ENCODE measurements at regions of chr14 and their contacts with region 1.

Region 1: DNA sequence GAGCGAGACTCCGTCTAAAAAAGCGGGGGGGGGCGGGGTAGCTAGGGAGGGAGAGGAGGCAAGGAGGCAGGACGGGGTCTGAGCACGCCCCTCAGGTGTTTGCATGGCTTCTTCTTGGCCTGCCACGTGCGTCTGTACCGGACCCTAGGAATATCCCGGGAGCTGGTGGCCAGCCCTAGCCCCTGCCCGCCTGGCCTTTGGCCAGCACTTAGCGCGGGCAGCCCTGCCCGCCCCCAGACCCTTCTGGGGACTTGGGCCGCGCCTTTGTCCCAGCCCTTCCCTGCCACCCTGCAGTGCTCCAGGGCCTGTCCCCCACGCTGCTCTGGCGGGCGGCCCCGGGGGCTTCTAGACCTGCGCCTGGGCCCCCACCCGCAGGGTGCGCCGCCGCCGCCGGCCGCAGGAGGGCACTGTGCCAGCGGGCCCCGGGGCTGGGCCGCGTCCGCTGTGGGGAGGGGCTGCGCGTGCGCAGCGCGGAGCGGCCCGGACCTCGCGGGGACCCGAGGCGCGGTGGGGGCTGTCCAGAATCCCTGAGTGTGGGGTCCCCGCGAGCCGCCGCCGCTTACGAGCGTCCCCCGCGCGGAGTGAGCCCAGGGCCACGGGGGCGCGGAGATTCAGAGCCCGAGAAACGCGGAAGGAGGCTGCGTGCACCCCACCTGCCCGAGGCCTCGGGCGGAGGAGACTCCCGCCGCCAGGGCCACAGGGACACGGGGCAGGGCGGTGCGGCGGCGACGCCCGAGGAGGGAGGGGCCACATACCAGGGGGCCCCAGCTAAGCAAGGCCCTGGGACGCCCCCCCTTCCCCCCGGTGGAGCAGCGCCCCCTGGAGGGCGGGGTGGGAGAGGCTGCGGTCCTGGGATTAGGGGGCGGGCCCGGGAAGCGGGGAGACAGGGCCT is 21.0 kb downstream of the SLC25A29 start:
- DNase-seq: peak; percentile 81
- ATAC-seq: peak; percentile 80 to 85
- H3K4me3 ChIP-seq: peak overlapping the region; percentile 67
- H3K27ac ChIP-seq: peak overlapping the region; percentile 96 to 100
- H3K4me1 ChIP-seq: peaks cover 9% of the 10 kb centered on the region; the same call in 2 of the 3 replicates
- CTCF ChIP-seq: peak; percentile 76
- EP300 ChIP-seq: no peak
- POLR2A ChIP-seq: peak; percentile 68
- RAD21 ChIP-seq: peak; percentile 10 to 41; a peak in 2 of 5 replicates

Region 2: DNA sequence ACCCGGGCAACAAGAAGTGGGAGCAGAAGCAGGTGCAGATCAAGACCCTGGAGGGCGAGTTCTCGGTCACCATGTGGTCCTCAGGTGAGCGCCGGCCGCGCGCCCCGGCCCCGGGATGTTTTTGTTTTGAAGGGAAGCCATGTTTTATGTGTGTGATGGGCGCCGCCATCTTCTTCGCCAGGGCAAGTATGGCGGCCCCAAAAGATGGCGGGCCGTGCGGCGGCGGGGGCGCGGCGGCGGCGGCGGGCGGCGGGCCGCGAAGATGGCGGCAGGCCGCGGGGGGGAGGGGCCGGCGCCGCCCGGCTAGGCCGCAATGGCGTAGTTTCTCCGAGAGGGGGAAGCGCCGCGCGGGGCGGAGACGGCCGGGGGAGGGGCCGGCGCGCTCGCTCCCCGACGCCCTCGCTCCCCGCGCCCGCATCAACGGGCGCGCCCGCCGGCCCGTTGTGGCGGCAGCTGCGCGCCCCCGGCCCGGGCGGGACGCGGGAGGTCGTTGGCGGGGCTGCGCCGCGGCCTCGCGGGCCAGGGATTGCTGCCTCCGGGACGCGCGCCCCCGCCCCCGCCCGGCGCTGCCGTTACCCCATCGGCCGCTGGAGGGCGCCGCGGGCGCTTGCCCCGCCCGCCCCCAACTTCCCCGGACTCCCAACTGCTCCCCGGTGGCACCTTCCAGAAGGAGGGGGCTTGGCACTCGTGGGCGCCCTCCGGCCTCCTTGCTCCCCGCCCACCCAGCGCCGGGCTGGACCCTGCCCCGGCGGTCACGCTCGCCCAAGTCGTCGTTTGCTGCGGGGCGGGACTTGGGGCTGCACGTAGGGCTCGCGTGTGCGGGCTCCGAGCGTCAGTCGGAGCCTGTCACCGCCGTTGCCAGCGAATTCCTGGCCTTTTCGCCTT is 45.2 kb before region 1 on chr14:
- CTCF ChIA-PET with region 1: interaction called, 17 read pairs
- POLR2A ChIA-PET with region 1: no interaction called
- DNase-seq: peak; percentile 62 to 91
- ATAC-seq: peak; percentile 63 to 81
- H3K4me3 ChIP-seq: peak overlapping the region; percentile 66
- H3K27ac ChIP-seq: peak overlapping the region; percentile 96 to 98
- H3K4me1 ChIP-seq: peaks cover 42% of the 10 kb centered on the region
- CTCF ChIP-seq: peak; percentile 96
- EP300 ChIP-seq: no peak
- POLR2A ChIP-seq: peak; percentile 26; the same call in 1 of the 2 replicates
- RAD21 ChIP-seq: peak in 1 of 2 experiments; percentile 28; a peak in 2 of 5 replicates

Region 3: DNA sequence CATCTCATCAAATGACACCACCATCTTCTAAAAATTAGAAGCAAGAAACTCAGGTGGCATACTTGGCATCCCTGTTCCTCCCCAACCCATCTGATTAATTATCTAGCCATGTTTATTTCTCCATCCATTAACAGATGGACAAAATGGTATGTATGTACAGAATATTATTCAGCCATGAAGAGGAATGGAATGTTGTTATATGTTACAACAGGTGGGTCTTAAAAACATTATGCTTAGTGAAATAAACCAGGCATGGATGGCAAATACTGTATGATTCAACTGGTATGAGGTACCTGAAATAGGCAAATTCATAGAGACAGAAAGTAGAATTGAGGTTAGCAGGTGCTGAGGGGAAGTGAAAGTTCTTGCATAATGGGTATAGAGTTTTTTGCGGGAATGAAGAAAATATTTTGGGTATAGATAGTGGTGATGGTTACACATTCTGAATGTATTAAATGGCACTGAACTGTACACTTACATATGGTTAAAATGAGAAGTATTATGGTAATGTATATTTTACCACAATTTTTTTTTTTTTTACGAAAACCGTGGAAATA is 28.9 kb before region 1 on chr14:
- CTCF ChIA-PET with region 1: interaction called, 16 read pairs
- POLR2A ChIA-PET with region 1: no interaction called
- DNase-seq: no peak
- ATAC-seq: no peak
- H3K4me3 ChIP-seq: no peak overlapping the region
- H3K27ac ChIP-seq: no peak overlapping the region
- H3K4me1 ChIP-seq: no peaks in the 10 kb centered on the region
- CTCF ChIP-seq: no peak
- EP300 ChIP-seq: no peak
- POLR2A ChIP-seq: no peak
- RAD21 ChIP-seq: no peak

Region 4: GRCh38 chr14:100271247-100271939 is 13.9 kb before region 1 on chr14:
- CTCF ChIA-PET with region 1: interaction called, 83 read pairs
- POLR2A ChIA-PET with region 1: interaction called, 3 read pairs
- DNase-seq: peak in 1 of 2 experiments; percentile 39
- ATAC-seq: peak in 1 of 2 experiments; percentile 43; a peak in 1 of 6 replicates
- H3K4me3 ChIP-seq: no peak overlapping the region
- H3K27ac ChIP-seq: no peak overlapping the region
- H3K4me1 ChIP-seq: 0 out of 3 replicates have a peak, but pooled peaks cover 5% of the 10 kb centered on the region
- CTCF ChIP-seq: peak; percentile 55
- EP300 ChIP-seq: no peak
- POLR2A ChIP-seq: no peak
- RAD21 ChIP-seq: peak; percentile 32 to 34; a peak in 2 of 5 replicates

Region 5: GRCh38 chr14:100297302-100298300 is 12.3 kb after region 1 on chr14:
- CTCF ChIA-PET with region 1: interaction called, 114 read pairs
- POLR2A ChIA-PET with region 1: no interaction called
- DNase-seq: no peak
- ATAC-seq: peak in 1 of 2 experiments; percentile 17; a peak in 1 of 6 replicates
- H3K4me3 ChIP-seq: no peak overlapping the region
- H3K27ac ChIP-seq: no peak overlapping the region
- H3K4me1 ChIP-seq: peaks cover 4% of the 10 kb centered on the region; the same call in 2 of the 3 replicates
- CTCF ChIP-seq: no peak
- EP300 ChIP-seq: no peak
- POLR2A ChIP-seq: no peak
- RAD21 ChIP-seq: no peak

Region 6: DNA sequence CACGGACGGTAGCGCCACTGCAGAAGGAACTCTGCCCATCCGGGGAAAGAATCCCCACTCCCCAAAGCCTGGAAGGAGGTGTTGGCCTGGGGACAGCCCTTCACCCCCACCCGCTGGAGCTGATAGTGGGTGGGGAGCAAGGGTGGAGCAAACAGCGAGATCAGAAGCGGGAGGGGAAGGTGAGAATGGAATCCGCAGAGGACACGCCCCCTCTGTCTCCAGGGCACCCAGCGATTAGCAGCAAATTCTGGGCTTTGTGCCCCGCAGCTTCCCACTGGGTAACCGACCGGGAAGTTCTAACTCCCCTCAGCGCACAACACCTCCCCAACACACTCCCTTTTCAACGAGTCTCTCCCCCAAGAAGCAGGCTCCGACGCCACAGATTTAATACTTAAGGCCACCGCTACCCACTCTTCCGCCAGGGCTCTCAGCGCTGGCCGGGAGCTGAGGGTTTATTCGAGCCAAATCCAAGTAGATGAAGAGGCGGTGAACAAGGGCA is 19.6 kb after region 1 on chr14:
- CTCF ChIA-PET with region 1: interaction called, 114 read pairs
- POLR2A ChIA-PET with region 1: interaction called, 4 read pairs
- DNase-seq: peak; percentile 35 to 36
- ATAC-seq: peak; percentile 7 to 37; a peak in 5 of 6 replicates
- H3K4me3 ChIP-seq: peak overlapping the region; percentile 88
- H3K27ac ChIP-seq: peak overlapping the region; percentile 68 to 91; a peak in 4 of 6 replicates
- H3K4me1 ChIP-seq: peaks cover 29% of the 10 kb centered on the region
- CTCF ChIP-seq: no peak
- EP300 ChIP-seq: no peak
- POLR2A ChIP-seq: no peak
- RAD21 ChIP-seq: no peak